Activated CD4-positive, alpha-beta memory T cell treated with anti-CD3 and anti-CD28 coated beads for 36 hours (primary cell): ENCODE measurements at regions of chr17 and their contacts with region 1.

Region 1: DNA sequence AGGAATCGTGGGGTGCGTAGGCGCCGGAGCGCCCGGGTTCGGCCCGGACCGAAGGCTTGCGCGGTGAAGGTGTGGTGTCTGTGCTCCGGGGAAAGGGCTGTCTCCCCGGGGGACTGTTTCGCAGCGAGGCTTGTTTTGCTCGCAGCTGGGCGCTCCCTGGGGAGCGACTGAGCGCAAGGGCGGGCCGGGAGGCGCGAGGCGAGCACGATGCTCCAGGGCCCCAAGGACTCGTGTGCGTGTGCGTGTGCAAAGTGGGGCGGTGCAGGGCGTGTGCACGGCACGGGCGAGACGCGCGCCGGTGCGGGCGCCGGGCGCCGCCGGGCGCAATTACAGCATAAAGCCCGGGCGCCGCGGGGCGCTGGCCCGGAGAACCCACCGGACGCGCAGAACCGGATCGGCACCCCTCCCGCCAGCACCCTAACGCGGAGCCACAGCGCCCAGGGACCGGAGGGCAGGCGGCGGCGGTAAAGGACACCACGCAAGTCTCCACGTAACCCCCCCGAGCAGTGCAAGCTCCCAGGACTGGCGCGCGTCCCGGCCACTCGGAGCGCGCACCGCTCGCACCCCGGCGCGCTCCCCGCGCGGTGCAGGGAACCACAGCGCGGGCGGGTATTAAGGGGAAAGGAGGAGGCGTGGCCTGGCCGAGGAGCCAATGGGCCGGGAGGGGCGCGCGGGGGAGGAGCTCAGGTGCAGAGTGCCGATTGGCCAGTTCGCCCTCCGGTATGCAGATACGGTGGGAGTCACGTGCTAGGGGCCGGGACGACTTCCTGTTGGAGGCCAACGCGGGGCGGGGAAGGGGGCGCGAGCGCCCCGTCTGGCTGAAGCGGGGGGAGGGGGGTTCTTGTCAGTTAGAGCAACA is at the start of gene TNRC6C:
- DNase-seq: peak; percentile 100
- H3K4me3 Mint-ChIP-seq: peak within 1 kb of the TSS; percentile 94
- H3K27ac Mint-ChIP-seq: peak within 1 kb of the TSS; percentile 82
- H3K4me1 Mint-ChIP-seq: peaks cover 36% of the 10 kb centered on the region
- H3K27me3 Mint-ChIP-seq: no peaks in the 10 kb centered on the region
- total RNA-seq, gene TNRC6C: 10.9 to 15.6 TPM

Region 2: DNA sequence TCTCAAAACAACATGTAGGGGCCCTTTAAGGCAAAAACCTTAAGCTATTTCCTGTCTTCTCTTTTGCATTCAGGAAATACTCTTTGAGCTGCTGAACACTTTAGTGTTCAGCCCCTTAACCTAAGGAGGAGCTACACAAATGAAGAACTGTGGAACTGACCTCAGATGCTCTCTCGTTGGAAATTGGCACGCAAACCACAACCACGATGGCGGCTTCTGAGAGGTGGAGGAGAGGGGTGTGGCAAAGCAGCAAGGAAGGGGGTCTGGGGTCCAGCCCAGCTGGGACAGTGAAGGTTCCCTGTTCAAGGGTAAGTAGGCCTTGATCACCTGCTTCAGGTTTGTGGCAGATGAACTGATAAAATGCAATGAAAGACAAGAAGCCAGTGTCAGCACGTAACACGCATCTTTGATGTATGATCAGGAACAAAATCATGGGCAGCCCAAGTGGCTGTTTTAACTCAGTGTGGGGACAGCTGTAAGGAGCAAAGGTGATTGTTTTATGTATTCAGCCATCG is 291.1 kb before region 1 on chr17:
- CTCF ChIA-PET with region 1: no interaction called
- POLR2A ChIA-PET with region 1: interaction called, 5 read pairs
- intact Hi-C with region 1: loop called (anchors 1 kb)
- DNase-seq: peak; percentile 89
- H3K4me3 Mint-ChIP-seq: peak overlapping the region; percentile 83
- H3K27ac Mint-ChIP-seq: peak overlapping the region; percentile 97
- H3K4me1 Mint-ChIP-seq: peaks cover 41% of the 10 kb centered on the region
- H3K27me3 Mint-ChIP-seq: no peaks in the 10 kb centered on the region

Region 3: GRCh38 chr17:77783991-77784820 is 173.9 kb before region 1 on chr17:
- CTCF ChIA-PET with region 1: no interaction called
- POLR2A ChIA-PET with region 1: interaction called, 12 read pairs
- intact Hi-C with region 1: no loop called
- DNase-seq: peak; percentile 86
- H3K4me3 Mint-ChIP-seq: peak overlapping the region; percentile 44
- H3K27ac Mint-ChIP-seq: peak overlapping the region; percentile 84
- H3K4me1 Mint-ChIP-seq: peaks cover 24% of the 10 kb centered on the region
- H3K27me3 Mint-ChIP-seq: no peaks in the 10 kb centered on the region

Region 4: DNA sequence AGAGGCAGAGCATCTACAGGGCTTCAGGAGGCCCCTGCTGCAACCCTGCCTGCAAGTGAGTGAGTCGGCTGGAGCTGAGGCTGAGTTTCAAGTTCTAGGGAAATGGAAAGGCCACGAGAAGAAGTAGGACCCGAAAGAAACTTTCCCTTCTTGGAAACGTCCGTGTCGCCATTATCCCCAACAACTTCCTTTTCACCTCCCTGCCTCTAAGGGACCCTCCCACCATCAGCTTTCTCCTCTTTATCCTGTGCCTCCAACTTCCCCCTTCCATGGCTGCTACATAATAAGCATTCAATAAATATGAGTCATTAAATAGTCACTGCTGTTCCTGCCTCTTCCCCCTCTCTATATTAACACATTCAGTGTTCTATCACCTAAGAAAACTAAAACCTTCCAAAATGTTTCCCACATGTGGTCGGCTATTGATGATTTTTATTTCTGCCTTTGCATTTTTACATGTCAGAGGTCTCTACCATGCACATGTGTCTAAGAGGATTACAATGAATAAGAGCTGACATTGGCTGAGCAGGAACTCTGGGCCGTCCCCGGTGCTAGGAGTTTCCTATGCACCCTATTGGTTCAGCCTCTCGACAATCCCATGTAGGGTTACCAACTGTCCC is 115.4 kb before region 1 on chr17:
- CTCF ChIA-PET with region 1: interaction called, 3 read pairs
- POLR2A ChIA-PET with region 1: interaction called, 10 read pairs
- intact Hi-C with region 1: loop called (anchors 2 kb)
- DNase-seq: peak; percentile 51
- H3K4me3 Mint-ChIP-seq: no peak overlapping the region
- H3K27ac Mint-ChIP-seq: peak overlapping the region; percentile 25
- H3K4me1 Mint-ChIP-seq: peaks cover 50% of the 10 kb centered on the region
- H3K27me3 Mint-ChIP-seq: peaks cover 2% of the 10 kb centered on the region

Region 5: GRCh38 chr17:77968788-77969187 is 10.7 kb after region 1 on chr17:
- CTCF ChIA-PET with region 1: interaction called, 4 read pairs
- POLR2A ChIA-PET with region 1: interaction called, 15 read pairs
- intact Hi-C with region 1: no loop called
- DNase-seq: no peak
- H3K4me3 Mint-ChIP-seq: no peak overlapping the region
- H3K27ac Mint-ChIP-seq: no peak overlapping the region
- H3K4me1 Mint-ChIP-seq: peaks cover 60% of the 10 kb centered on the region
- H3K27me3 Mint-ChIP-seq: no peaks in the 10 kb centered on the region